HepG2 (cell line): ENCODE measurements at regions of chr5 and their contacts with region 1.

Region 1: GRCh38 chr5:134904630-134905245 is at the start of gene PCBD2:
- DNase-seq: peak; percentile 80
- ATAC-seq: peak; percentile 91
- H3K4me3 ChIP-seq: peak within 1 kb of the TSS; percentile 85 to 95 (median 87)
- H3K27ac ChIP-seq: peak within 1 kb of the TSS; percentile 99
- H3K4me1 ChIP-seq: peaks cover 13% of the 10 kb centered on the region; the same call in 1 of the 2 replicates
- H3K27me3 ChIP-seq: no peaks in the 10 kb centered on the region
- CTCF ChIP-seq: peak; percentile 94
- EP300 ChIP-seq: 0 out of 4 replicates have a peak, but pooled peaks of 1 of the 2 experiments have one; percentile 12
- POLR2A ChIP-seq: peak; percentile 74
- RAD21 ChIP-seq: peak; percentile 88
- total RNA-seq, gene PCBD2: 12.0 and 12.3 TPM in 2 replicates

Region 2: GRCh38 chr5:134738133-134738962 is 166.4 kb before region 1 on chr5 and contains the start of gene CAMLG:
- CTCF ChIA-PET with region 1: no interaction called
- POLR2A ChIA-PET with region 1: interaction called, 17 read pairs
- in situ Hi-C with region 1: no loop called
- intact Hi-C with region 1: loop called (anchors 2 kb)
- DNase-seq: peak; percentile 92
- ATAC-seq: peak; percentile 96
- H3K4me3 ChIP-seq: peak within 1 kb of the TSS; percentile 83 to 91 (median 83)
- H3K27ac ChIP-seq: peak within 1 kb of the TSS; percentile 61
- H3K4me1 ChIP-seq: peaks cover 40% of the 10 kb centered on the region
- H3K27me3 ChIP-seq: no peaks in the 10 kb centered on the region; a peak in 1 of 5 replicates
- CTCF ChIP-seq: peak; percentile 97
- EP300 ChIP-seq: no peak
- POLR2A ChIP-seq: peak; percentile 78 to 87
- RAD21 ChIP-seq: peak; percentile 81
- total RNA-seq, gene CAMLG: 19.8 and 23.1 TPM in 2 replicates

Region 3: DNA sequence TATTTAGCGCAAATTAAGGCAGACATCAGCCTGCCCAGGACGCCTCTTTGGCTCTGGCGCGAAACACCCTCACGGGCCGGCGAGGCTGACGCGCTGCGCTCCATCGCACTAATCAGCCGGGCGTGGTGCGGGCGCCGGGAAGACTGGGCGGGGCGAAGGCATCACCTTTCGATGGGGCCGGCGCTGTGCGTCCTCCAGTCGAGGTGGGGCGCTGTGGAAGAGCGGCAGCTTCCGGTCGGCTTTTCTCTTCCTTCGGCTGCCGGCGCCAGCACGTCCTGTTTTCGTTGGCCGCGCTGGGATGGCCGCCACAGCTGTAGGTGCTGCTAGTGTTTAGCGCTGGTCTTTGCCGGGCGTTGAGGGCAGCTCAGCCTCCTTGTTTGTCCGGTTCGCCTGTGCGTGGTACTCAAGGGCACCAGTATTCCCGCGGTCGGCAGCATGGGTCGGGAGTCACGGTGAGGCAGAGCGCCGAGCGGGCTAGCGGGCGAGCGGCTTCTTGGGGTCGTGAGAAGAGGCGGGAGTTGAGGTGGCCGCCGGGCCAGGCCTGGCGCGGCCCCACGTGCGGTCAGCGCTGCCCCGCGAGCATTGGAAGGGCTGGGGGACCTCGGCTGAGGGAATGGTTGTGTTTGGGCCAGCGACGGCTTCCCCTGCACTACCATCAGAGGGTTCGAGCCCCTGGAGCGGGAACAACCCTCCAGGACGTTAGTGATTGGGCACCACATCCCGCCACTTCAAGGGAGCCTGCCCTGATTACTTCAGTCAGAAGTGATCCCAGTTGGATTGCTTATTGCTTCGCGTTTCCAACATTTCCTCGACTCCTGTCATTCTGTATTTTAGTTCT is 146.0 kb before region 1 on chr5 and contains the start of gene DDX46:
- CTCF ChIA-PET with region 1: no interaction called
- POLR2A ChIA-PET with region 1: interaction called, 18 read pairs
- in situ Hi-C with region 1: no loop called
- intact Hi-C with region 1: no loop called
- DNase-seq: peak; percentile 85
- ATAC-seq: peak; percentile 98
- H3K4me3 ChIP-seq: peak within 1 kb of the TSS; percentile 70 to 93 (median 76)
- H3K27ac ChIP-seq: peak within 1 kb of the TSS; percentile 76
- H3K4me1 ChIP-seq: peaks cover 30% of the 10 kb centered on the region
- H3K27me3 ChIP-seq: no peaks in the 10 kb centered on the region; a peak in 1 of 5 replicates
- CTCF ChIP-seq: peak; percentile 98
- EP300 ChIP-seq: 0 out of 4 replicates have a peak, but pooled peaks of 1 of the 2 experiments have one; percentile 7
- POLR2A ChIP-seq: peak; percentile 89 to 90
- RAD21 ChIP-seq: peak; percentile 55
- total RNA-seq, gene DDX46: 59.3 and 74.8 TPM in 2 replicates

Region 4: GRCh38 chr5:134845852-134846640 is 58.7 kb before region 1 on chr5 and contains the start of gene C5orf24:
- CTCF ChIA-PET with region 1: no interaction called
- POLR2A ChIA-PET with region 1: interaction called, 11 read pairs
- in situ Hi-C with region 1: no loop called
- intact Hi-C with region 1: loop called (anchors 2 kb)
- DNase-seq: peak; percentile 88
- ATAC-seq: peak; percentile 96
- H3K4me3 ChIP-seq: peak within 1 kb of the TSS; percentile 72 to 81 (median 74)
- H3K27ac ChIP-seq: peak within 1 kb of the TSS; percentile 94
- H3K4me1 ChIP-seq: peaks cover 50% of the 10 kb centered on the region
- H3K27me3 ChIP-seq: no peaks in the 10 kb centered on the region
- CTCF ChIP-seq: no peak; the same call in 1 of the 2 replicates
- EP300 ChIP-seq: no peak
- POLR2A ChIP-seq: peak; percentile 93 to 94
- RAD21 ChIP-seq: peak; percentile 71
- total RNA-seq, gene C5orf24: 41.5 and 52.6 TPM in 2 replicates

Region 5: GRCh38 chr5:134873987-134874830 is 30.5 kb before region 1 on chr5 and contains the start of gene TXNDC15:
- CTCF ChIA-PET with region 1: no interaction called
- POLR2A ChIA-PET with region 1: interaction called, 19 read pairs
- in situ Hi-C with region 1: no loop called
- intact Hi-C with region 1: loop called (anchors 2 kb)
- DNase-seq: peak; percentile 66
- ATAC-seq: peak; percentile 94
- H3K4me3 ChIP-seq: peak within 1 kb of the TSS; percentile 72 to 96 (median 94)
- H3K27ac ChIP-seq: peak within 1 kb of the TSS; percentile 84
- H3K4me1 ChIP-seq: peaks cover 31% of the 10 kb centered on the region
- H3K27me3 ChIP-seq: no peaks in the 10 kb centered on the region; a peak in 1 of 5 replicates
- CTCF ChIP-seq: peak; percentile 32; the same call in 1 of the 2 replicates
- EP300 ChIP-seq: no peak
- POLR2A ChIP-seq: peak; percentile 82 to 90
- RAD21 ChIP-seq: no peak; the same call in 1 of the 2 replicates
- total RNA-seq, gene TXNDC15: 33.6 and 49.9 TPM in 2 replicates

Region 6: GRCh38 chr5:134964359-134965270 is 59.9 kb after region 1 on chr5:
- CTCF ChIA-PET with region 1: no interaction called
- POLR2A ChIA-PET with region 1: interaction called, 14 read pairs
- in situ Hi-C with region 1: no loop called
- intact Hi-C with region 1: no loop called
- DNase-seq: peak; percentile 92
- ATAC-seq: peak; percentile 83
- H3K4me3 ChIP-seq: peak overlapping the region in 2 of 3 experiments; percentile 10 to 35; a peak in 3 of 6 replicates
- H3K27ac ChIP-seq: peak overlapping the region; percentile 65
- H3K4me1 ChIP-seq: peaks cover 35% of the 10 kb centered on the region
- H3K27me3 ChIP-seq: no peaks in the 10 kb centered on the region
- CTCF ChIP-seq: no peak
- EP300 ChIP-seq: peak in 1 of 2 experiments; percentile 91; a peak in 2 of 4 replicates
- POLR2A ChIP-seq: no peak
- RAD21 ChIP-seq: no peak

Region 7: DNA sequence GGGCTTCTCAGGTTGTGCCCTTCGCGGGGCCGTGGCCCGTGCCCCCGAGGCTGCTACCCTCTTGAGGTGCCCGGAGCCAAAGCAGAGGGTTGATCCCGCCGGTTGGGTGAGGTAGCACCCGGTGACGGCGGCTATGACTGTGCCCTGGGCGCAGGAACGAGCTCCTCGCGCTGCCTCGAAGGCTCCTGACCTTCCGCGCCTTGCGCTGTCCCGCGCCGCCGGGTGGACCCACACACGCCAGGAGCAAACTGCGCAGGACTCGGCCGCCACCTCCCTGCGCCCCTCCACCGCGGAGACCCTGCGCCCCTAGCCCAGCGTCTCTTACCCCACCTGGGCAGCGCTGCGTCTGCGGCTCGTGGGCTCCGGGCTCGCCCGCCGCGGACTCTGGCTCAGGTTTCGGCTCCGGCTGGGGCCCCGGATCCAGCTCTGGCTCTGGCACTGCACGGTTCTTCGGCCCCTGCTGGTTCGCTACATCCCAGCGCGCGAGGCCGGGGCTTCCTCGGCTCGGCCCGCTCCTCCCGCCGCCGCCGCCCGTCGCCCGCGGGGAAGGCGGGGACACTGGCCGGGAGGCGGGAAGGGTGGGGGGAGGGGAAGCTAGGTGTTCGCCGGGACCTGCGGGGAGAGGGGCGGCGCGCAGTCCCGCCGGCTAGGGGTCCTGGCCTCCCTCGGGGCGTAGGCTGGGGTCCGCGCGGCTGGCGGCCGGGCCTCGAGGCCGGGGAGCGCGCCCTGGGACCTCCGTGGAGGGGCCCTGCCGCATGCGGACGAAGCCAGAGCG is 134.7 kb after region 1 on chr5:
- CTCF ChIA-PET with region 1: no interaction called
- POLR2A ChIA-PET with region 1: no interaction called
- in situ Hi-C with region 1: no loop called
- intact Hi-C with region 1: no loop called
- DNase-seq: no peak
- ATAC-seq: no peak
- H3K4me3 ChIP-seq: no peak overlapping the region
- H3K27ac ChIP-seq: no peak overlapping the region
- H3K4me1 ChIP-seq: peaks cover 12% of the 10 kb centered on the region
- H3K27me3 ChIP-seq: no peaks in the 10 kb centered on the region
- CTCF ChIP-seq: no peak
- EP300 ChIP-seq: no peak
- POLR2A ChIP-seq: no peak
- RAD21 ChIP-seq: no peak